ENCODE measurements at regions of chr2 and their contacts with region 1.

Region 1: GRCh38 chr2:238082827-238083226 is 17.3 kb upstream of the ESPNL start:
- DNase-seq: no peak
- H3K4me3 ChIP-seq: no peak overlapping the region
- H3K27ac ChIP-seq: no peak overlapping the region
- H3K4me1 ChIP-seq: peaks cover 13% of the 10 kb centered on the region
- H3K27me3 ChIP-seq: no peaks in the 10 kb centered on the region
- CTCF ChIP-seq: no peak

Region 2: GRCh38 chr2:237085248-237086221 is 997.3 kb before region 1 on chr2 and contains the start of gene COPS8:
- CTCF ChIA-PET with region 1: no interaction called
- POLR2A ChIA-PET with region 1: no interaction called
- intact Hi-C with region 1: no loop called
- DNase-seq: peak; percentile 87 to 98
- H3K4me3 ChIP-seq: peak within 1 kb of the TSS; percentile 85
- H3K27ac ChIP-seq: peak within 1 kb of the TSS; percentile 53
- H3K4me1 ChIP-seq: peaks cover 19% of the 10 kb centered on the region
- H3K27me3 ChIP-seq: no peaks in the 10 kb centered on the region
- CTCF ChIP-seq: peak; percentile 45; the same call in 1 of the 2 replicates
- total RNA-seq, gene COPS8: 57.6 and 64.7 TPM in 2 replicates

Region 3: DNA sequence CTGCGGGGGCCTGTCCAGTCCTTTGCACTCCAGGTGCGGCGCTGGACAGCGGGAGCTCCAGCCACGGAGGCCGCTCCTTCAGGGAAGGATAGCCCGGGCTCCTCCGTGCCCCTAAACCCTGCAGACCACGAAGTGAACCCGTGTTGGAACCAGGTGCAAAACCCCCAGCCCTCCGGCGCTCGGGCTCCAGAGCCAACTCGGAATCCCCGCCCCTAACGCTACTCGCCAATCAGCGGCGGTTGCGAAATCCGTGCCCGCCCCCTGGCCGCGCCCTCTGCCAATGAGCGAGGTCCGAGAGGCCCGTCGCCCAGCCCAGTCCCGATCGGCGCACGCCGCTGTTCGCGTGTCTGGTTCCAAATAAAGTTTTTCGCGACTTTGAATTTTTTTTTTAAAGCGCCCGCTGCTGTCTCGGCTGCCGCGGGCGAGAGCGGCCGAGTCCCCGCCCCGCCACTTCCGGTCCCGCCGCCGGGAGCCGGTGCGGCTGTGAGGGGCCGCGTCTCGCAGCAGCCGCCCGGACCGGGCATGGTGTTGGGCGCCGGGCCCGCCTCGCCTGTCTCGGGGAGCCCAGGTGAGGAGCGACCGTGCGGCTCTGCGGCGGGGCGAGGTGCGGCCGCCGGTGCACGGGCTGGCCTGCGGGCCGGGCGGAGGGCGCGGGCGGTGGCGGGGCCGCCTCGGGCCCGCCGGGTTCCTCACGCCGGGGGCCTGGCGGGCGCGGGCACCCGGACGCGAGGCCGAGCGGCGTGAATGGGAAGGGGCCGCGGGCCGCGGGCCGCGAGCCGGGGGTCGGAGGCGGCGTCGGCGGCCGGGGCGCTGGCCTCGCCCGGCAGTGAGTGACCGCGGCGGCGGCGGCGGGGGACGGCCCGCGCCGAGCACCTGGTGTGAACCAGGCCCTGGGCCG is 116.0 kb before region 1 on chr2 and contains the start of gene UBE2F:
- CTCF ChIA-PET with region 1: no interaction called
- POLR2A ChIA-PET with region 1: interaction called, 10 read pairs
- intact Hi-C with region 1: no loop called
- DNase-seq: peak; percentile 92 to 100
- H3K4me3 ChIP-seq: peak within 1 kb of the TSS; percentile 96
- H3K27ac ChIP-seq: peak within 1 kb of the TSS; percentile 91
- H3K4me1 ChIP-seq: peaks cover 45% of the 10 kb centered on the region
- H3K27me3 ChIP-seq: no peaks in the 10 kb centered on the region
- CTCF ChIP-seq: no peak
- total RNA-seq, gene UBE2F: 76.7 and 103 TPM in 2 replicates

Region 4: DNA sequence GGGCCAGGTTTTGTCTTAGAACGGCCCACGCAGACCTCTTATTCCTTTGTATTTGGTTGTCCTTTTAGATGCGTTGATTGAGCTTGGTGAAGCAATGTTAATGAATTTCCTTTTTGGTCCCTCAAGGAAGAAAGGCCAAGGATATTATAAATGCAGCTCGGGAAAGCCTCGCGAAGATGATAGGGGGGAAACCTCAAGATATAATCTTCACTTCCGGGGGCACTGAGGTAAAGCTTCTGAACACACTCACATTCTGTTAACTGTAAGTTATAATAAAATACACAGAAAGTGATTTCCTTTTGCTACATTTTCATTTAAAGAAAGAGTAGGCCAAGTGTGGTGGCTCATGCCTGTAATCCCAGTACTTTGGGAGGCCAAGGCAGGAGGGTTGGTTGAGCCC is 14.9 kb before region 1 on chr2:
- CTCF ChIA-PET with region 1: no interaction called
- POLR2A ChIA-PET with region 1: no interaction called
- intact Hi-C with region 1: no loop called
- DNase-seq: no peak
- H3K4me3 ChIP-seq: no peak overlapping the region
- H3K27ac ChIP-seq: no peak overlapping the region
- H3K4me1 ChIP-seq: no peaks in the 10 kb centered on the region
- H3K27me3 ChIP-seq: no peaks in the 10 kb centered on the region
- CTCF ChIP-seq: no peak

Region 5: DNA sequence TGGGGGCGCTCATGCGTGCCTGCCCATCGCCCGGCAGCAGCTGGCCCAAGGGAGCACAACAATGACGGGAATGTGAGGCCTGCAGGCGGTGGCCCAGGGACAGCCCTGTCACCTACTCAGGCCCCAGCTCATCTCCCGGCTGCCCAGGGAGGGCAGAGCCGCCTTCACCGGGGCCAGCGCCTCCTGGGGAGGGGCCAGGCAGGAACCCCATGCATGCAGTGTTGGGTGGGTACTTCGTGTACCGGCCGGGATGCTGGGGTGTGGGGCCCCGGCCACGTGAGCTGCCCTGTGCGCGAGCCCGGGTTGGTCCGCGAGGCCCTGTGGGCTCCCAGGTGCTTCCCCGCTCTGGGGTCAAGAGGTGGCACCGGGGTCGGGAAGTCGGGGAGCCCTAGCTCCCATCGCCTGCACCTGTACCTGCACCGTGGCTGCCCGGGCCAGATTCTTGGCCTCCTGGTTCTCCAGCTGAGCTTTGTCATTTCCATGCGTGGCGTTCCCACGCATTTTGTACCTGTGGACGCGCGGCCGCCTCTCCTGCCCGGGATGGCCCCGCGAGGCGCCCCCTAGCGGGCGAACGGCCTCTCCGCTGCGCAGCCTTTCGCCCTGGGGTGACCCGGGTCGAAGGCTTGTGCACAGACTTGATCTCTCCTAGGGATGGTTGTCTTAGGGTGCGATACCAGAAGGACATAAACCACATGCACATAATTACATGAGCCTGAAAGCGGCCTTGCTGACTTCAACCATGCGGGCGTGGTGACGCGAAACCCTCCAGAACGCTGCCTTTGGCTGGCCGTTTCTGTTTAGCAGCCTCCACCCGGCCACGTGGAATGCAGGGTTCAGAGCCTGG is 56.6 kb after region 1 on chr2:
- CTCF ChIA-PET with region 1: no interaction called
- POLR2A ChIA-PET with region 1: no interaction called
- intact Hi-C with region 1: no loop called
- DNase-seq: peak in 1 of 2 experiments; percentile 64
- H3K4me3 ChIP-seq: no peak overlapping the region
- H3K27ac ChIP-seq: no peak overlapping the region
- H3K4me1 ChIP-seq: peaks cover 64% of the 10 kb centered on the region
- H3K27me3 ChIP-seq: no peaks in the 10 kb centered on the region
- CTCF ChIP-seq: peak; percentile 47